Mammary epithelial cell (primary cell): ENCODE measurements at regions of chr12 and their contacts with region 1.

Region 1: GRCh38 chr12:95217377-95218149 is at the starts of genes FGD6 and VEZT:
- DNase-seq: peak; percentile 100
- H3K4me3 ChIP-seq: peak within 1 kb of the TSS; percentile 72 to 95 (median 92)
- H3K27ac ChIP-seq: peak within 1 kb of the TSS; percentile 93
- H3K4me1 ChIP-seq: peaks cover 21% of the 10 kb centered on the region
- H3K27me3 ChIP-seq: no peaks in the 10 kb centered on the region
- CTCF ChIP-seq: peak; percentile 41 to 75
- total RNA-seq, gene FGD6: 39.3 to 55.6 TPM
- total RNA-seq, gene VEZT: 113 to 133 TPM

Region 2: GRCh38 chr12:95102916-95103671 is 114.5 kb before region 1 on chr12:
- CTCF ChIA-PET with region 1: interaction called, 3 read pairs
- dilution Hi-C with region 1: no loop called
- in situ Hi-C with region 1: no loop called
- intact Hi-C with region 1: loop called (anchors 1 kb)
- DNase-seq: peak; percentile 98
- H3K4me3 ChIP-seq: no peak overlapping the region
- H3K27ac ChIP-seq: peak overlapping the region; percentile 78
- H3K4me1 ChIP-seq: peaks cover 22% of the 10 kb centered on the region
- H3K27me3 ChIP-seq: no peaks in the 10 kb centered on the region
- CTCF ChIP-seq: no peak

Region 3: DNA sequence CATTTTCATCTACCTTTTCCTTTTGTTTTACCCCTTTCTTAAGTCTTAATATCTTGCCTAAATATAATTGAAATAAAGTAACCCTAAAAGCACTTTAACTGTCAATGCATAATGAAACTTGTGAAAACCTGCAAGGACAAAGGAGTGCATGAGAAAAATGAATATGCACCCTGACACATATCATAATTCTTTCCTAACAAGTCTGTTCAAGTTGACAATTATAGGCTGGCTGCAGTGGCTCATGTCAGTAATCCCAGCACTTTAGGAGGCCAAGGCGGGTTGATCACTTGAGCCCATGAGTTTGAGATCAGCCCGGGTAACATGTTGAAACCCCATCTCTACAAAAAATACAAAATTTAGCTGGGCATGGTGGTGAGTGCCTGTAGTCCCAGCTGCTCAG is 65.7 kb before region 1 on chr12:
- CTCF ChIA-PET with region 1: interaction called, 3 read pairs
- dilution Hi-C with region 1: no loop called
- in situ Hi-C with region 1: no loop called
- intact Hi-C with region 1: loop called (anchors 1 kb)
- DNase-seq: peak; percentile 75
- H3K4me3 ChIP-seq: no peak overlapping the region
- H3K27ac ChIP-seq: peak overlapping the region; percentile 25
- H3K4me1 ChIP-seq: peaks cover 5% of the 10 kb centered on the region
- H3K27me3 ChIP-seq: no peaks in the 10 kb centered on the region
- CTCF ChIP-seq: no peak

Region 4: GRCh38 chr12:95204141-95204866 is 13.3 kb before region 1 on chr12:
- CTCF ChIA-PET with region 1: interaction called, 4 read pairs
- dilution Hi-C with region 1: no loop called
- in situ Hi-C with region 1: no loop called
- intact Hi-C with region 1: loop called (anchors 1 kb)
- DNase-seq: peak; percentile 100
- H3K4me3 ChIP-seq: peak overlapping the region; percentile 23 to 53 (median 38)
- H3K27ac ChIP-seq: peak overlapping the region; percentile 100
- H3K4me1 ChIP-seq: peaks cover 53% of the 10 kb centered on the region
- H3K27me3 ChIP-seq: no peaks in the 10 kb centered on the region
- CTCF ChIP-seq: no peak

Region 5: GRCh38 chr12:95532851-95533250 is 315.3 kb after region 1 on chr12:
- CTCF ChIA-PET with region 1: interaction called, 3 read pairs
- dilution Hi-C with region 1: no loop called
- in situ Hi-C with region 1: no loop called
- intact Hi-C with region 1: loop called (anchors 5 kb)
- DNase-seq: peak; percentile 62
- H3K4me3 ChIP-seq: no peak overlapping the region
- H3K27ac ChIP-seq: no peak overlapping the region
- H3K4me1 ChIP-seq: peaks cover 5% of the 10 kb centered on the region
- H3K27me3 ChIP-seq: no peaks in the 10 kb centered on the region
- CTCF ChIP-seq: no peak